HepG2 (cell line): ENCODE measurements at regions of chr5 and their contacts with region 1.

Region 1: GRCh38 chr5:38404667-38405276 is 146.4 kb downstream of the EGFLAM start:
- DNase-seq: peak; percentile 24
- ATAC-seq: peak; percentile 83
- H3K4me3 ChIP-seq: no peak overlapping the region
- H3K27ac ChIP-seq: no peak overlapping the region
- H3K4me1 ChIP-seq: no peaks in the 10 kb centered on the region
- H3K27me3 ChIP-seq: peaks cover 0 to 14% of the 10 kb centered on the region in 2 experiments; a peak in 1 of 5 replicates
- CTCF ChIP-seq: peak; percentile 71
- EP300 ChIP-seq: no peak
- POLR2A ChIP-seq: no peak
- RAD21 ChIP-seq: peak; percentile 49; the same call in 1 of the 2 replicates

Region 2: DNA sequence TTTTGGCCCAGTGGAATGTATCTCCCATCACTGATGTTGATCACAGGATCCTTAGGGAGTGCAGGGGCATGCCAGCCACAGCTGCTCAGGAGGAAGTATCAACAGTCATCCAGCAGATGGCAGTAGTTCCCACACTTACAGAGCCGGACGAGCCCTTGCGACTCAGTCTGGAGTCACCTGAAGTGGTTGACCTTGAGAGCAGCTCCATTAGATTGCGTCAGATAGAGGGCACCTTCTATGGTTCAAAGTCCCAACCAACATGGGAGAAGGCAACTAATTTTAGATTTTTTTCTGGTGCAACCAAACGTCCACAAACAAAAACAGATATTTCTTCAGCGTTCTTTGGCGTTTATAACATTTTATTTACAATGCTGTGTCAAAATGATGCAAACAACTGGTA is 21.9 kb before region 1 on chr5:
- CTCF ChIA-PET with region 1: interaction called, 16 read pairs
- POLR2A ChIA-PET with region 1: no interaction called
- in situ Hi-C with region 1: no loop called
- intact Hi-C with region 1: loop called (anchors 1 kb)
- DNase-seq: peak; percentile 85
- ATAC-seq: peak; percentile 99
- H3K4me3 ChIP-seq: no peak overlapping the region
- H3K27ac ChIP-seq: no peak overlapping the region
- H3K4me1 ChIP-seq: peaks cover 6% of the 10 kb centered on the region; the same call in 1 of the 2 replicates
- H3K27me3 ChIP-seq: peaks cover 0 to 14% of the 10 kb centered on the region in 2 experiments; a peak in 3 of 5 replicates
- CTCF ChIP-seq: peak; percentile 90
- EP300 ChIP-seq: peak in 1 of 2 experiments; percentile 35; a peak in 1 of 4 replicates
- POLR2A ChIP-seq: no peak
- RAD21 ChIP-seq: peak; percentile 79

Region 3: DNA sequence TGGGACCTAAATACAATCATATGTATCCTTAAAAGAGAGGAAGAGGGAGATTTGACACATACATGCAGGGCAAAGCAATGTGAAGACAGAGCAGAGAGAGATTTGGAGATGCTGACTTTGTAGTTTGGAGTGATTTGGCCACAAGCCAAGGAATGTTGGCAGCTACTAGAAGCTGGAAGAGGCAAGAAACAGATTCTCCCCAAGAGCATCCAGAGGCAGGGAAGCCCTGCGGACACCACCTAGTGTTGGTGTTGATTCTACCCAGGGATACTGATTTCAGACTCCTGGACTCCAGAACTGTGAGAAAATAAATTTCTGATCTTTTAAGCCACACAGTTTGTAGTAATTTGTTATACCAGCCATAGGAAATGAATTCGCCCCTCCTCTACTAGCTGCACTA is 376.2 kb after region 1 on chr5:
- CTCF ChIA-PET with region 1: no interaction called
- POLR2A ChIA-PET with region 1: no interaction called
- in situ Hi-C with region 1: no loop called
- intact Hi-C with region 1: no loop called
- DNase-seq: no peak
- ATAC-seq: no peak
- H3K4me3 ChIP-seq: no peak overlapping the region
- H3K27ac ChIP-seq: no peak overlapping the region
- H3K4me1 ChIP-seq: peaks cover 14% of the 10 kb centered on the region
- H3K27me3 ChIP-seq: no peaks in the 10 kb centered on the region
- CTCF ChIP-seq: no peak
- EP300 ChIP-seq: no peak
- POLR2A ChIP-seq: no peak
- RAD21 ChIP-seq: no peak